ENCODE measurements at regions of chr17 and their contacts with region 1.

Region 1: DNA sequence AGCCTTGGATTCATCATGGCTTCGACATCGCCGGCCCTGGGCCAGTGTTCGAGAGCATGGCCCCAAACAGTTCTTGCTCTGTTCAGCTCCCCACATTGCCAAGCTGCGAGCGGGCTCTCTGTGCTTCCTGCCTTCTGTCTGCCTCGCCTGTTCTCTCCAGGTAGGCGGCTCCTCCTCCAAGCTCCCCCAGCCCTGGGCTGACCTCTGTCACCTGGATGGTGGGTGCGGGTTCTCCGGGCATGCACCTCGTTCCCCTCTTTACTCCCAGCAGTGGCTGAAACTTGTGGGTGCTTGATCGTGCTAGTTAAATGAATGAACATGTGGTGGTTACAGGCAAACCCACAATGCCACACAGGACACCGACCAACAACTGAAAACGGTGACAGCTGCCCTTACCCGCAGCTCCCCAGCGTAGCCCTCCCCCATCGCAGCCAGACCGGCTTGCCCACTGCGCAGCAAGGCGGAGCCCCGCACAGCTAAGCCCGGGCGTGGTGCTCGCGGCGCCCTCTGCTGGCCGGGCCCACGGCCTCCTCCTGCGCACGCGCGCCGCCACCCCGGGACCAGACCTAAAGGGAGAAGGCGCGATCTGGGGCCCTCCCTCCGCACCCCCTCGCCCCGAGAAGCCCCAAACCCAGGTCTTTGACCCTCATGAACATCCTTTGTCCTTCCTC is 23.0 kb upstream of the EIF1 start:
- DNase-seq: peak; percentile 80 to 91
- ATAC-seq: peak; percentile 93 to 97 (median 96)
- H3K4me3 ChIP-seq: peak overlapping the region; percentile 43 to 68 (median 58)
- H3K27ac ChIP-seq: peak overlapping the region in 9 of 10 donors; percentile 46 to 89 (median 76)
- H3K4me1 ChIP-seq: peaks cover 0 to 34% (median 14%) of the 10 kb centered on the region in 9 donors
- H3K27me3 ChIP-seq: no peaks in the 10 kb centered on the region
- CTCF ChIP-seq: peak; percentile 93 to 99 (median 98)

Region 2: DNA sequence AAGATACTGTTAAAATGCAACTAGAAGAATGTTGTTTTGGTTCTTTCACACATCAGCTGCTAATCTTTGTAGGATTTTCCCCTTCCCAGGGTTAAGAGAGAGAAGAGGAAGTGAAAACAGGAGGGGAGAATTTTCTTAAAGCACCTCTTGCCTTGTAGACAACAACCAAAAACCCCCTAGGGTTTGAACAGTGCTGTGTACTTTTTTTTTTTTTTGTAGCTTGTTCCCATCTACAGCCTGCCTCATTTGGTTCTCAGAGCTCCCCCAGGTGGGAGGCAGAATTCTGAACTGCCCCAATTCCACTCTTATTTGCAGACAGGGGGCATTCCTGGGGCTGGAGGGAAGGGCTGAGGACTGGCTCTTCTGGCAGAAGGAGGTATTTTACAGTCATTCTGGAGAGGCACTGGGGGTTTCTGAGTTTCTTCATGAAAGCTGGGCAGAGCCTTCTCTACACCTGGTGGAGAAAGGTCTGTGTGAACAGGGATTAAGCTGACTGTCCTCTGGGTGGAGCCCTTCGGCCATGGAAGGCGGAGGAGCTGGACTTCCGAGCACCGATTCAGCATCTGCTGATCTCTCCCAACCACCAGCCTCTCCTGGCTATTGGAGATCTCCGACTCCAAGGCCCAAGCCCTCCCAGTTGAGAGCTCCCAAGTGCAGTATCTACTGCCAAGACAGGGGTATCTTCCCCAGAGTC is 1050.3 kb before region 1 on chr17:
- intact Hi-C with region 1: loop called in 1 of 10 experiments (anchors 10 kb)
- DNase-seq: peak in 1 of 2 donors; percentile 40
- ATAC-seq: peak in 4 of 8 donors; percentile 31 to 60 (median 50)
- H3K4me3 ChIP-seq: no peak overlapping the region
- H3K27ac ChIP-seq: no peak overlapping the region
- H3K4me1 ChIP-seq: peaks cover 0 to 19% (median 6%) of the 10 kb centered on the region in 9 donors
- H3K27me3 ChIP-seq: peaks cover 4 to 48% (median 15%) of the 10 kb centered on the region in 7 donors
- CTCF ChIP-seq: peak in 7 of 9 donors; percentile 22 to 53 (median 39)

Region 3: GRCh38 chr17:40809721-40810421 is 855.8 kb before region 1 on chr17:
- intact Hi-C with region 1: loop called in 3 of 10 experiments (anchors 5 to 10 kb)
- DNase-seq: no peak
- ATAC-seq: peak; percentile 47 to 93 (median 69)
- H3K4me3 ChIP-seq: no peak overlapping the region
- H3K27ac ChIP-seq: peak overlapping the region in 7 of 10 donors; percentile 4 to 58 (median 47)
- H3K4me1 ChIP-seq: peaks cover 0 to 31% (median 22%) of the 10 kb centered on the region in 9 donors
- H3K27me3 ChIP-seq: peaks cover 0 to 85% (median 0%) of the 10 kb centered on the region in 7 donors
- CTCF ChIP-seq: no peak

Region 4: GRCh38 chr17:40915199-40915661 is 750.5 kb before region 1 on chr17:
- intact Hi-C with region 1: loop called in 2 of 10 experiments (anchors 5 kb)
- DNase-seq: no peak
- ATAC-seq: no peak
- H3K4me3 ChIP-seq: no peak overlapping the region
- H3K27ac ChIP-seq: no peak overlapping the region
- H3K4me1 ChIP-seq: peaks cover 0 to 35% (median 0%) of the 10 kb centered on the region in 9 donors
- H3K27me3 ChIP-seq: peaks cover 0 to 7% (median 0%) of the 10 kb centered on the region in 7 donors
- CTCF ChIP-seq: no peak

Region 5: DNA sequence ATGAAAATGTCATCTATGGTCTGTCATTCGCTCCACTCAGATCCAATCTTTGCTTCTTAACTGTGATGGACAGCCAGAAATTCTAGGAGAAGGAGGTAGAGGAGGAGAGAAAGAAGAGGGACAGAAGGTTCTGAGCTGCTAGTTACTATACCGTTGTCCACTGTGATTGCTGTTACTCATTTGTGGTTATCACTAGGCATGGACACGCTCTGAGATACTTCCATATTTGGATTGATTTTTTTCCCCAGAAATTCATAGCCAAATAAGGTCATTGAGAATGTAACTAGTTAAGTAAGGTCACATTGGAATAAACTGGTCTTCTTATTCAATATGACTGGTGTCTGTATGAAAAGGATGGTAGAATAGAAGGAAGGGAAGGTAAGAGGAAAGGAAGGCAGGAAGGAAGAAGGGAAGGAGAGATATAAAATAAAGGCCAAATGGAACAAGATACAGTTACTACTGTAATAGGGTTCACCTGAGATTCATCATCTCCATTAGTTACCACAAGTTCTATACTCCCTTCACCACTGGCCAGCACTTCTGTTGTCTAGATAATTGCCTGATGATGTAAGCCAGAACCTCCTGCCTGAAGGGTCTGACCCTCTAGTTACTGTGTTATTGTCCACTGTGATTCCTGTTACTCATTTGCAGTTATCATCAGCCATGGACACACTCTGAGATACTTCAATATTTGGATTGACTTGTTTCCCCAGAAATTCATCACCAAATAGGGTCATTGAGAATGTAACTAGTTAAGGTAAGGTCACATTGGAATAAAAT is 387.3 kb before region 1 on chr17:
- intact Hi-C with region 1: no loop called
- DNase-seq: no peak
- ATAC-seq: no peak
- H3K4me3 ChIP-seq: no peak overlapping the region
- H3K27ac ChIP-seq: no peak overlapping the region
- H3K4me1 ChIP-seq: no peaks in the 10 kb centered on the region
- H3K27me3 ChIP-seq: peaks cover 0 to 35% (median 20%) of the 10 kb centered on the region in 7 donors
- CTCF ChIP-seq: no peak

Region 6: GRCh38 chr17:41648411-41649195 is 17.1 kb before region 1 on chr17:
- intact Hi-C with region 1: loop called in 3 of 10 experiments (anchors 2 kb)
- DNase-seq: peak; percentile 84 to 90
- ATAC-seq: peak; percentile 91 to 98 (median 96)
- H3K4me3 ChIP-seq: peak overlapping the region in 9 of 10 donors; percentile 14 to 52 (median 43)
- H3K27ac ChIP-seq: peak overlapping the region in 4 of 10 donors; percentile 11 to 40 (median 24)
- H3K4me1 ChIP-seq: peaks cover 0 to 30% (median 11%) of the 10 kb centered on the region in 9 donors
- H3K27me3 ChIP-seq: peaks cover 0 to 7% (median 0%) of the 10 kb centered on the region in 7 donors
- CTCF ChIP-seq: peak; percentile 90 to 98 (median 94)

Measured in heart right ventricle (tissue), 16 donors.